ENCODE measurements at regions of chr6 and their contacts with region 1.

Region 1: DNA sequence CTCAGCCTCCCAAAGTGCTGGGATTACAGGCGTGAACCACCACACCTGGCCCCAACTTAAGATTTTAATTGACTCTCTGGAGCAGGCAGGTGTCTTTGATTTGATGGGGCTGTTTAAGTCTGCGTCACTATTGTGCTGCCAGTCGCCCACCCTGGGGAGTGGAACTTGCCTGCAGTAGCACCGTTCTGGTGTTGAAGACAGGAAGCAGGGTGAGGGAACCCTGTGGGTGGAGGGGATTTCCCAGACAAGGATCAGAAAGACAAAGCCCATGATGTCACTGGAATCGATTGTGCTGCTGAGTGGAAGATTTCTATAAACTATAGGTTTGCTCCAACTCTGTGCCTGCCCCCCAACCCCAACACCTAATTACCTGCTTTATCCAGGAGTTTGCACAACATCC is 11.0 kb downstream of the ALDH8A1 start:
- DNase-seq: peak; percentile 52
- H3K4me3 Mint-ChIP-seq: no peak overlapping the region
- H3K27ac Mint-ChIP-seq: no peak overlapping the region
- H3K4me1 Mint-ChIP-seq: peaks cover 12% of the 10 kb centered on the region
- H3K27me3 Mint-ChIP-seq: no peaks in the 10 kb centered on the region

Region 2: DNA sequence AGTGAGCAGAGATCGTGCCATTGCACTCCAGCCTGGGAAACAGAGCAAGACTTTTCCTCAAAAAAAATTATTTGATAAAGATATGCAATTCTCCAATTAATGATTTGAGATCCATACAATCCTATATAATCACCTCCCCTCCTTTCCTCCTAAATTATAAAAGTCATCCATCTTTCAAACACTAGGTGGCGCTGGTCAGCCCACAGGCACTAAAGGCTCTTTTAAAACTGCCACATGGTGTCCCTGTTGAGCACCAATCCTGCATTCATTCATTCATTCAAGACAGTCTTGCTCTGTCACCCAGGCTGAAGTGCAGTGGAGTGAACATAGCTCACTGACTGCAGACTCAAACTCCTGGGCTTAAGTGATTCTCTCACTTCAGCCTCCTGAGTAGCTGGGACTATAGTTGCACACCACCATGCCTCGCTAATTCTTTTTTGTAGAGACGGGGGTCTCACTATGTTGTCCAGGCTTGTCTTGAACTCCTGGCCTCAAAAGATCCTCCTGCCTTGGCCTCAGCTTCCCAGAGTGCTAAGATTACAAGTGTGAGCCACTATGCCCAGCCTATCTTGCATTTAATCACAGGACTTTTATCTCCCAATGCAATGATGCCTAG is 827.7 kb before region 1 on chr6:
- CTCF ChIA-PET with region 1: interaction called, 11 read pairs
- POLR2A ChIA-PET with region 1: no interaction called
- DNase-seq: peak; percentile 52
- H3K4me3 Mint-ChIP-seq: no peak overlapping the region
- H3K27ac Mint-ChIP-seq: no peak overlapping the region
- H3K4me1 Mint-ChIP-seq: peaks cover 7% of the 10 kb centered on the region
- H3K27me3 Mint-ChIP-seq: peaks cover 20% of the 10 kb centered on the region

Region 3: GRCh38 chr6:134152767-134153485 is 786.0 kb before region 1 on chr6:
- CTCF ChIA-PET with region 1: interaction called, 25 read pairs
- POLR2A ChIA-PET with region 1: no interaction called
- DNase-seq: no peak
- H3K4me3 Mint-ChIP-seq: no peak overlapping the region
- H3K27ac Mint-ChIP-seq: no peak overlapping the region
- H3K4me1 Mint-ChIP-seq: no peaks in the 10 kb centered on the region
- H3K27me3 Mint-ChIP-seq: no peaks in the 10 kb centered on the region

Region 4: GRCh38 chr6:134619789-134620188 is 319.1 kb before region 1 on chr6:
- CTCF ChIA-PET with region 1: no interaction called
- POLR2A ChIA-PET with region 1: no interaction called
- DNase-seq: no peak
- H3K4me3 Mint-ChIP-seq: no peak overlapping the region
- H3K27ac Mint-ChIP-seq: no peak overlapping the region
- H3K4me1 Mint-ChIP-seq: peaks cover 9% of the 10 kb centered on the region
- H3K27me3 Mint-ChIP-seq: peaks cover 6% of the 10 kb centered on the region

Region 5: GRCh38 chr6:134640975-134641429 is 297.9 kb before region 1 on chr6:
- CTCF ChIA-PET with region 1: interaction called, 14 read pairs
- POLR2A ChIA-PET with region 1: no interaction called
- DNase-seq: peak; percentile 80
- H3K4me3 Mint-ChIP-seq: no peak overlapping the region
- H3K27ac Mint-ChIP-seq: no peak overlapping the region
- H3K4me1 Mint-ChIP-seq: peaks cover 29% of the 10 kb centered on the region
- H3K27me3 Mint-ChIP-seq: no peaks in the 10 kb centered on the region

Region 6: GRCh38 chr6:134928151-134928900 is 10.6 kb before region 1 on chr6:
- CTCF ChIA-PET with region 1: interaction called, 13 read pairs
- POLR2A ChIA-PET with region 1: no interaction called
- DNase-seq: no peak
- H3K4me3 Mint-ChIP-seq: no peak overlapping the region
- H3K27ac Mint-ChIP-seq: no peak overlapping the region
- H3K4me1 Mint-ChIP-seq: peaks cover 1% of the 10 kb centered on the region
- H3K27me3 Mint-ChIP-seq: no peaks in the 10 kb centered on the region

Region 7: DNA sequence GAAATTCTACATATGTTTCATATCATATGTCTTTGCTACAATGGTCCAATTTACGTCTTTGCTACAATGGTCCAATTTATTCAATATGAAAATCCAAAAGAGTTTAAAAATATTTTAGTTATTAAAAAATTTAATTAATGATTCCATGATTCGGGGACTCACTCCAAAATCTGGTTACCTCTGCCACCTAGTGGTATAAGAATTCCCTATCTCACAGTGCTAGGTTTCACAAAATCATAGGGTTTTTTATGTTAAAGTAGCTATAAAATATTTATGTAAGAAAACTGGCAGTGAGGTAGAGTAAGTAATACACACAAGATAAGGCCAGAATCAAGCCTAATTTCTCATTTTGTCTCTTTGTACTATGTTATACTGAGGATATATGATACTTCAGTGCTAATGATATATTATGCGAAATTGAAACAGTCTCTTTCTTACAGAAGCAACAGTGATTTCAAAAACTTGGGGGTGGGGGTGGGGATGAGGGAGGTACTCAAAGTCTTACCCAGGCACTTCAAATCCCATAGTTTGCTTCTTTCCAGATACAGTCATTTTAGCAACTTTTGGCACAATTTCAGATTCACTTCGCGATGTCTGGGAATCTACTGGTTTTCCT is 63.4 kb after region 1 on chr6:
- CTCF ChIA-PET with region 1: interaction called, 11 read pairs
- POLR2A ChIA-PET with region 1: no interaction called
- DNase-seq: no peak
- H3K4me3 Mint-ChIP-seq: no peak overlapping the region
- H3K27ac Mint-ChIP-seq: no peak overlapping the region
- H3K4me1 Mint-ChIP-seq: peaks cover 20% of the 10 kb centered on the region
- H3K27me3 Mint-ChIP-seq: no peaks in the 10 kb centered on the region